Heart right ventricle (tissue), 16 donors: ENCODE measurements at regions of chr7 and their contacts with region 1.

Region 1: GRCh38 chr7:20158684-20159083 is 58.5 kb downstream of the MACC1 start:
- DNase-seq: no peak
- ATAC-seq: peak in 7 of 8 donors; percentile 49 to 82 (median 71)
- H3K4me3 ChIP-seq: no peak overlapping the region
- H3K27ac ChIP-seq: no peak overlapping the region
- H3K4me1 ChIP-seq: no peaks in the 10 kb centered on the region
- H3K27me3 ChIP-seq: peaks cover 0 to 4% (median 0%) of the 10 kb centered on the region in 7 donors
- CTCF ChIP-seq: peak in 8 of 9 donors; percentile 15 to 62 (median 54)

Region 2: GRCh38 chr7:19754521-19755116 is 404.1 kb before region 1 on chr7:
- intact Hi-C with region 1: loop called in 1 of 10 experiments (anchors 10 kb)
- DNase-seq: no peak
- ATAC-seq: no peak
- H3K4me3 ChIP-seq: no peak overlapping the region
- H3K27ac ChIP-seq: no peak overlapping the region
- H3K4me1 ChIP-seq: no peaks in the 10 kb centered on the region
- H3K27me3 ChIP-seq: no peaks in the 10 kb centered on the region
- CTCF ChIP-seq: peak; percentile 10 to 75 (median 66)

Region 3: DNA sequence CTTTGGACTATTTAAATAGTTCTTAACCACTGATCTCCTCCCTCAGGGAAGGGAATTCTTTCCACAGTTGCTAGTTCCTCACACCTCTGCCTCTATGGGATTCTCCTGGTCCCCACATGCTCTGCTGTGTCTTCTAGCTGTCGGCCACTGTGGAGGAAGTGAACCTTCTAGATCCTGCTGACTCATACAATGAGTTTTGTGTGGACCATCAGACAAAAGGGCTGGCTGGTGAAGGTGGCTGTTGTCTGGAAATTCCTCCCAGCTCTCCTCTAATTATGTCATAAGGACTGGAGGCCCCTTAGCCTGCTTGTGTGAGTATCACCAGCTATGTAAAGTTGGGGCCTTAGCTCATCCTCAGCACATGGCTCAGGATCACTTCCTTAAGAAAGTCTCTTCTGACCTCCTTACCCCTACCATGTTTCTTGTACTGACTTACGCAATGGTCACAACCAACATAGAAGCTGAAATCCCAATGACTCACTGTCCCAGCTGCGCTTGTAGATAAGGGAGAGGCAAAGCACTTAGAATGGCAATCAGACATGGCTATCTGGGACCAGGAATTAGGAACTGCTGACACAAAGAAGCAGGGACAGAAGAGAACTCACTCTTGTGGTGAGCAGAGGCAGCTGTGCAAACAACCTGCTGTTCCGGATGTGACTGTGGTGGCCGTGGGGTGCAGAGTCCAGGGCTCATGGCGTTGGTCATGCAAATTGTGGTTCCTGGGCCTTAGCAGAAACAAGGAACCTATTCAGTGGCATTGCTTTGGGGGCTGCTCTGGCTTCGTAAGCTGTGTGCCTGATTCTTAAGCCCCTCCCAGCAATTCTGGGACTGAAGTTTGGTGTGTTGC is 61.0 kb after region 1 on chr7:
- intact Hi-C with region 1: no loop called
- DNase-seq: peak; percentile 55 to 73
- ATAC-seq: peak; percentile 78 to 94 (median 90)
- H3K4me3 ChIP-seq: no peak overlapping the region
- H3K27ac ChIP-seq: peak overlapping the region; percentile 30 to 87 (median 64)
- H3K4me1 ChIP-seq: peaks cover 0 to 63% (median 10%) of the 10 kb centered on the region in 9 donors
- H3K27me3 ChIP-seq: no peaks in the 10 kb centered on the region
- CTCF ChIP-seq: no peak

Region 4: DNA sequence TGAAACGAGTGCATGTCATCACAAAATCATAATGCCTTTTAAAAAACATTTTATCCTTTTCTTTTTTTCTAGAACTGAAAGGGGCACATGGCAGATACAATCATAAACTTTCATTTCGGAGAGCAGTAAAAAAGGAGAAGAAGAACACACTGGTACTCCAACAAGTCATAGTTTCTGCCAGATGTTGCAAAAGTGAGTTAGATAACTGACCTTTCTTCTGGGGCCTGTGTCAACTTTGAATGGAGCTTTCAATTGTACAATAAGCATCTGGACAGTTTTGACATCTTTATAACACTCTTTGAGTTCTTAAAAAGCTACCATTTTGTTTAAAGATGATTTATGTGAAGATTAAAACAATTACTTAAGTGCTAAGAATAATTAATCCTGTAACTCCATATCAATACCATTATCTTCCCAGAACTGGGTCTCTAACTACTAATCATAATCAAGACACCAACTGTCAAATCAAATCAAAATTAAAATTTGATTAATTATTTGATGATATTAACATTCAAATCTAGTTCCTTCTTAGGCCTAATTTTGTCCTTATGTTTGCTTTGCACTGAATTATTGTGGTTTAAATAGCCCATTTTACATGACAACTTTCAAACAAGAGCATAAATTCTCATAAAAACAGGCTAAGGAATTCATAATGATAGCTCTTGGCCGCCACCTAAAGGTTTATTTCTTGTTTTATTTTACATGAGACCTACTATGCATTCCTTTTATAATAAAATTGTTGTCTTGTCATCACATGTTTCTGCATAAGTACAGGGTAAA is 152.5 kb after region 1 on chr7:
- intact Hi-C with region 1: loop called in 7 of 10 experiments (anchors 5 to 10 kb)
- DNase-seq: no peak
- ATAC-seq: no peak
- H3K4me3 ChIP-seq: no peak overlapping the region
- H3K27ac ChIP-seq: no peak overlapping the region
- H3K4me1 ChIP-seq: peaks cover 0 to 5% (median 0%) of the 10 kb centered on the region in 9 donors
- H3K27me3 ChIP-seq: no peaks in the 10 kb centered on the region
- CTCF ChIP-seq: peak in 8 of 9 donors; percentile 17 to 50 (median 34)